Activated CD4-positive, alpha-beta T cell treated with anti-CD3 and anti-CD28 coated beads, Interleukin-2, amount 10 ng/mL, durations not matched to agents 24 days and 14 days (primary cell): ENCODE measurements at regions of chr1 and their contacts with region 1.

Region 1: GRCh38 chr1:24635195-24635843 is 7.8 kb upstream of the SRRM1 start:
- DNase-seq: peak; percentile 69
- H3K4me3 Mint-ChIP-seq: no peak overlapping the region
- H3K27ac Mint-ChIP-seq: no peak overlapping the region
- H3K4me1 Mint-ChIP-seq: peaks cover 7% of the 10 kb centered on the region
- H3K27me3 Mint-ChIP-seq: peaks cover 15% of the 10 kb centered on the region

Region 2: GRCh38 chr1:24199289-24199900 is 435.9 kb before region 1 on chr1:
- intact Hi-C with region 1: loop called (anchors 2 kb)
- DNase-seq: peak; percentile 92
- H3K4me3 Mint-ChIP-seq: peak overlapping the region; percentile 51
- H3K27ac Mint-ChIP-seq: no peak overlapping the region
- H3K4me1 Mint-ChIP-seq: peaks cover 31% of the 10 kb centered on the region
- H3K27me3 Mint-ChIP-seq: peaks cover 3% of the 10 kb centered on the region